Transverse colon (tissue), 4 donors: ENCODE measurements at regions of chr10 and their contacts with region 1.

Region 1: DNA sequence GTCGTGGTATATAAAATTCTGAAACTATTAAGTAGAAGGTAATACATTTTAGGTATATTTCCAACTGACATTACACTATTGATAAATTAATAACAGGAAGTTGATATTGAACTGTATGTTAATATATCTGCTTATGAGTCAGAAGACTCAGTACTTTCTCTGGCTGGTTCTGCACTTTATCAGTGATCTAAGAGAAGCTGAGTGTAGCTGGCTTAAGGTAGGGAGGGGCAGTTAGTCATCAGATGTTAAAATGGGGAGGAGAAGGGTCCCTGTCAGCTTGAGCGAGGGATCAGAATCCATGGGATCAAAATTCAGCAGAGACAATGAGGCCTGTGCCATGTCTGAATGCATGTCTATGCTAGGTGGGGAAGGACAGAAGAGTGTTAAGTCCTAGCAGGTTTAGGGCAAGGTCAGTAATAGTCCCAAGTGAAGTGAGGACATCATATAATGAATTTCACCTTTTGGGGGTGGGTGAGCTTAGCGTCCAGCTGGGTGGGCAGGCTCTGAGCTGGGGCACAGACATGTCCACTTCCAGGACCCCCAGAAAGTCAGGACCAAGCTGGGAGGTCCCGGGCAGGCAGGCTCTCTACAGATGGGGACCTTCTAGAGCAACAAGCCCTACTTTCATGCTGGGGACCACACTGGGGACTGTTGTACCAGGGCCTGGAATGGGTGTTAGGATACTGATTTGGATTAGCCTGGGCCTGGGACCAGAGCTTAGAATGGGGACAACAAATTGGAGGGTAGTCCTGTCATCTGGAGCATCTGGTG is 82.9 kb downstream of the WDFY4 start:
- DNase-seq: no peak
- H3K4me3 ChIP-seq: no peak overlapping the region
- H3K27ac ChIP-seq: no peak overlapping the region
- H3K4me1 ChIP-seq: no peaks in the 10 kb centered on the region
- H3K27me3 ChIP-seq: no peaks in the 10 kb centered on the region
- CTCF ChIP-seq: no peak
- EP300 ChIP-seq: no peak
- POLR2A ChIP-seq: no peak

Region 2: DNA sequence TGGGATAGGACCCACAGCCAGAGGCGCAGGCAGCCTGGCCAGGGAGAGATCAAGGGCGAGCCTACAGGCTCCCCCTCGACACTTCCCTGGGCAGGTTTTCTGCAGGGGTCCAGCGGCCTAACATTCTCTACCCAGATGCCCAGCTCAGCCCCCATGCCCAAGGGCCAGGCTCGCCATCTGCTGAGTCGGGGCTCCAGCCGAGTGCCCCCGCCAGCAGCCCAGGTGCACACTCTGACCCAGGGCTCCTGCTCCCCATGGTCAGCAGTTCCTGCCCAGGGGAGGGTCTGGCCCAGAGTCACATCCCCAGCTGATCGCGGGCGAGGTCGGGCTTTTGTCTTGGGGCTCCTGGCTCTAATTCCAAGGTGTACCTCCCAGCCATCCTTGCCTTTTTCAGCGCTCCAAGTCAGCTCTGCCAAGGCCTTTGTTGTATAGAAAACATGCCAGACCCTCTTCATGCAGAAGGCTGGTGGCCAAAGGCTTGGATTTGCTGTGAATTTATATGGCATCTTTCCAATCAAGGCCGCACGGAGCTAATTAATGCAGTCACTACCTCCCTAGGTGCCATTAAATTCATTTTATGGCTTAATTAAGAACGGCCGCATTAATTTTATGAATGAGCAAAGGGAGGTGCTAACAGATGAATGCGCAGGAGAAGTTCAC is 51.4 kb after region 1 on chr10:
- in situ Hi-C with region 1: no loop called
- intact Hi-C with region 1: loop called (anchors 2 kb)
- DNase-seq: no peak
- H3K4me3 ChIP-seq: no peak overlapping the region
- H3K27ac ChIP-seq: no peak overlapping the region
- H3K4me1 ChIP-seq: no peaks in the 10 kb centered on the region
- H3K27me3 ChIP-seq: no peaks in the 10 kb centered on the region
- CTCF ChIP-seq: no peak
- EP300 ChIP-seq: no peak
- POLR2A ChIP-seq: no peak